CD14-positive monocyte (primary cell): ENCODE measurements at regions of chr21 and their contacts with region 1.

Region 1: GRCh38 chr21:45643021-45643980 is at the start of gene PCBP3:
- DNase-seq: peak; percentile 92 to 95 (median 93)
- H3K4me3 ChIP-seq: peak within 1 kb of the TSS in 2 of 3 experiments; percentile 46 to 63
- H3K4me3 Mint-ChIP-seq: peak within 1 kb of the TSS; percentile 74 to 87
- H3K27ac ChIP-seq: no peak within 1 kb of the TSS
- H3K27ac Mint-ChIP-seq: peak within 1 kb of the TSS in 1 of 7 donors; percentile 68
- H3K4me1 ChIP-seq: peaks cover 10 to 28% of the 10 kb centered on the region in 2 donors
- H3K4me1 Mint-ChIP-seq: peaks cover 24% of the 10 kb centered on the region
- H3K27me3 ChIP-seq: peaks cover 7 to 18% of the 10 kb centered on the region in 2 donors
- H3K27me3 Mint-ChIP-seq: peaks cover 17 to 26% (median 19%) of the 10 kb centered on the region in 3 donors
- CTCF ChIP-seq: no peak
- polyA plus RNA-seq, gene PCBP3: 0.34 to 0.49 TPM in 2 of 3 donors, not detected in the other

Region 2: GRCh38 chr21:45590246-45590725 is 53.0 kb before region 1 on chr21:
- intact Hi-C with region 1: loop called (anchors 2 to 5 kb)
- DNase-seq: peak; percentile 42 to 75 (median 67)
- H3K4me3 ChIP-seq: peak overlapping the region; percentile 21 to 74 (median 35)
- H3K4me3 Mint-ChIP-seq: peak overlapping the region; percentile 58 to 68
- H3K27ac ChIP-seq: no peak overlapping the region
- H3K27ac Mint-ChIP-seq: no peak overlapping the region
- H3K4me1 ChIP-seq: peaks cover 9 to 17% of the 10 kb centered on the region in 2 donors
- H3K4me1 Mint-ChIP-seq: peaks cover 15% of the 10 kb centered on the region
- H3K27me3 ChIP-seq: peaks cover 16 to 34% of the 10 kb centered on the region in 2 donors
- H3K27me3 Mint-ChIP-seq: peaks cover 23 to 43% (median 31%) of the 10 kb centered on the region in 3 donors
- CTCF ChIP-seq: no peak

Region 3: GRCh38 chr21:45846373-45847160 is 203.3 kb after region 1 on chr21:
- intact Hi-C with region 1: no loop called
- DNase-seq: no peak
- H3K4me3 ChIP-seq: no peak overlapping the region
- H3K4me3 Mint-ChIP-seq: no peak overlapping the region
- H3K27ac ChIP-seq: no peak overlapping the region
- H3K27ac Mint-ChIP-seq: no peak overlapping the region
- H3K4me1 ChIP-seq: no peaks in the 10 kb centered on the region
- H3K4me1 Mint-ChIP-seq: peaks cover 1% of the 10 kb centered on the region
- H3K27me3 ChIP-seq: no peaks in the 10 kb centered on the region
- H3K27me3 Mint-ChIP-seq: peaks cover 0 to 2% (median 0%) of the 10 kb centered on the region in 3 donors
- CTCF ChIP-seq: no peak